ENCODE measurements at regions of chr12 and their contacts with region 1.

Region 1: DNA sequence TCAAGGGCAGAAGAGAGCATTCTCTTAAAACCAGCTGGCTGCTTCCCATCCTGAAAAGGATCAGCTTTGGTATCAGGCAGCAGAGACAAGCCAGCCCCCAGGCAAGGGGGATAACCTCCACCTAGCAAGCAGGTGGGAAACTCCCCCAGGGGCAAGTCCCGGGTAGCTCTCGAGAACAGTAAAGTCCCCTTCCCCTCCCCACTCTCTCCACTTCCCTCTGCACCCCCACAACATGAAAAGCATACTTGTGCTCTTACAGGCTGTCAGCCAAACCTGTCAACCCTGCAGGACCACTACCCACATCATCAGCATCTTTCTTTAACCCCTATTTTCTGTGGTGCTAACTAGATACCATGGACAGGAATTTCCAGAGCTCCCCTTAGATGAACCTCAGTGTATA is 254.1 kb downstream of the NTF3 start:
- DNase-seq: no peak
- H3K4me3 ChIP-seq: no peak overlapping the region
- H3K27ac ChIP-seq: no peak overlapping the region
- H3K4me1 ChIP-seq: no peaks in the 10 kb centered on the region
- H3K27me3 ChIP-seq: no peaks in the 10 kb centered on the region
- CTCF ChIP-seq: no peak
- EP300 ChIP-seq: no peak
- POLR2A ChIP-seq: no peak

Region 2: DNA sequence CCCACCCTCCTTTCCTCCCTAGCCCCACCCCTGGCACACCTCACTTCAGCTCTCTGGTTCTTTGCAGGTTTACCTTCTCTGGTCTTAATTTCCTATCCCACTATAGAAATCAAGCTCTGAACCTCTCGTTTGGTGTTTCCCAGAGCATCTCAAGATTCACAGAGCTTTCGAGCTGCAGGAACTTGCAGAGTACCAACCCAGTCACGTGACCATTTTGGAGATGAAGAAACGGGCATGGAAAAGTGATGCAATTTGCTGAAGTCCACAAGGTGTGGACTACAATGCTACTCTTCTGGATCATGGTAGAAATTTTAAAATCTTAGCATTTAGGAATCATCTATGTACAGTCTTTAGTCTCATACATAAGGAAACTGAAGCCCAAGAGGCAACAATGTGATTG is 48.3 kb before region 1 on chr12:
- in situ Hi-C with region 1: no loop called
- intact Hi-C with region 1: loop called (anchors 1 kb)
- DNase-seq: no peak
- H3K4me3 ChIP-seq: no peak overlapping the region
- H3K27ac ChIP-seq: no peak overlapping the region
- H3K4me1 ChIP-seq: no peaks in the 10 kb centered on the region
- H3K27me3 ChIP-seq: no peaks in the 10 kb centered on the region
- CTCF ChIP-seq: no peak
- EP300 ChIP-seq: no peak
- POLR2A ChIP-seq: no peak

Measured in transverse colon (tissue), 4 donors.